GM10248 (cell line): ENCODE measurements at regions of chr16 and their contacts with region 1.

Region 1: DNA sequence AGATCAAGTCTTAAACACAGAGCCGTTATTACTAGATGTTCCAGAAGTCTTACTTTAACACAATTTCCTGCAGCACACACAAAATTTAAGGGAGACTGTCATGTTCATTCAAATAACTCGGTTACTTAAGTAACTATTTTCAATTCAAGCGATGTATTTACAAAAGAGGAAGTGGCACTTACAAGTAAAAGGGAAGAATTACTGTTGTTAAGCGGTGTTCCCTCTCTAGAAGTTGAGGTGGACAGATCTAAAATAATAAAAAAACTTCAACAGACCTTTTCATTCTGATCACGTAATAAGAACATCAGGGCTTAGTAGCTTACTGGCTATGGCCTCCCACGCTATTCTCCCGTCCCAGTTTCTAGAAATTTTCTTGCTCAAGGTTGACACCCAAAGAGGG is 26.2 kb upstream of the TXNDC11 start:
- DNase-seq: peak; percentile 29
- CTCF ChIP-seq: no peak

Region 2: GRCh38 chr16:11783319-11784037 is 14.6 kb after region 1 on chr16:
- CTCF ChIA-PET with region 1: interaction called, 11 read pairs
- POLR2A ChIA-PET with region 1: no interaction called
- DNase-seq: peak; percentile 63
- CTCF ChIP-seq: no peak